HepG2 (cell line): ENCODE measurements at regions of chr12 and their contacts with region 1.

Region 1: DNA sequence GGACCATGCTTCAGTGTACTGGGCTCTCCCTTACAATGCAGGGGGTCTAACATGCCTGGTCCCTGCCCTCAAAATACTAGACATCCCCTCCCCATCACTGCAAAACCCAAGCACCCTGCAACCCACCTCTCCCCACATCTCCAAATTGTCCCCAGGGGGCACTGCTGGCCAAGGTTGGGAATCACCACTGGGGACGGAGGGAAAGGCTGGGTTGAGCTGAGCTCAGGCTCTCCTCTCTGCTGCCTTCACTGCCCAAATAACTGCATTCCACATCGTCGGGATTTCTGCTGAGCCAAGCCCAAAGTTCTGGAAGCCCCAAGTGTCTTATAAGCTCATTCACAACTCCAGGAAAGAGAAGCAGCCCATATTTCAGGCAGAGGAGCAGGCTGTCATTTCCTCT is 69.6 kb downstream of the NT5DC3 start:
- DNase-seq: peak; percentile 42
- ATAC-seq: peak; percentile 92
- H3K4me3 ChIP-seq: no peak overlapping the region
- H3K27ac ChIP-seq: no peak overlapping the region
- H3K4me1 ChIP-seq: peaks cover 9% of the 10 kb centered on the region; the same call in 1 of the 2 replicates
- H3K27me3 ChIP-seq: no peaks in the 10 kb centered on the region
- CTCF ChIP-seq: peak; percentile 79
- EP300 ChIP-seq: no peak
- POLR2A ChIP-seq: no peak
- RAD21 ChIP-seq: peak; percentile 79

Region 2: DNA sequence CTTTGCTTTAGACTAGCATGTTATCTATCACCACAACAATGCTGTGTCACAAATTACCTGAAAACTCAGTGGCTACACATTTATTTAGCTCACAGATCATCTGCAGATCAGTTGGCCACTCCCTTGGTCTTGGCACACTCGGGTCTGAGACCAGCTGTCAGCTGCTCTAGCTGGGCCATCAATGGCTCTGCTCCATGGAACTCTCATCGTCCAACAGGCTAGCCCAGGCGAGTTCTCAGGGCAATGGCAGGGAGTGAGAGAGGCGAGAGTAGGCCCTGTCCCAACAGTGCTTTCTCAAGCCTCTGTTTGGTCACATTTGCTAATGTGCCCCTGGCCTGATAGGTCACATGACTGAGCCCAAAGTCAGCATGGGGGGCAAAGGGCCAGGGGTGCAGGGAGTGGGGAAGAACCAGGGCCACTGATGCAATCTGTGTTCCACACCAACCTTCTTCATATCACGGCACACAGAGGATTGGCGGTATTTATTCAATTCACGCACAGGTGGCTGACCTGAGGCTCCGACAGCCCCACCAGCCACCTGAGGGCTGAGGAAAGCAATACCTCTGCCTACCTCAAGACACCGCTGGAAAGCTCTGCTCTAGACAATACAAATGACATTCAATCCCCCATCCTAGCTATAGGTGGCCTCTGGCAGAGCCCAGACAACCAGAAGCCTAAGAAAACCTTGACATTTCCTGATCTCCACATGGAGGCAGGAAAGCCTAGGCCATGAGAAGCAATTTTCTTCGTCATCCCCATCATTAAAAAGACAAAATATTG is 13.0 kb before region 1 on chr12:
- CTCF ChIA-PET with region 1: no interaction called
- POLR2A ChIA-PET with region 1: no interaction called
- in situ Hi-C with region 1: no loop called
- intact Hi-C with region 1: no loop called
- DNase-seq: no peak
- ATAC-seq: no peak
- H3K4me3 ChIP-seq: no peak overlapping the region
- H3K27ac ChIP-seq: no peak overlapping the region
- H3K4me1 ChIP-seq: no peaks in the 10 kb centered on the region
- H3K27me3 ChIP-seq: no peaks in the 10 kb centered on the region
- CTCF ChIP-seq: no peak
- EP300 ChIP-seq: no peak
- POLR2A ChIP-seq: no peak
- RAD21 ChIP-seq: no peak

Region 3: DNA sequence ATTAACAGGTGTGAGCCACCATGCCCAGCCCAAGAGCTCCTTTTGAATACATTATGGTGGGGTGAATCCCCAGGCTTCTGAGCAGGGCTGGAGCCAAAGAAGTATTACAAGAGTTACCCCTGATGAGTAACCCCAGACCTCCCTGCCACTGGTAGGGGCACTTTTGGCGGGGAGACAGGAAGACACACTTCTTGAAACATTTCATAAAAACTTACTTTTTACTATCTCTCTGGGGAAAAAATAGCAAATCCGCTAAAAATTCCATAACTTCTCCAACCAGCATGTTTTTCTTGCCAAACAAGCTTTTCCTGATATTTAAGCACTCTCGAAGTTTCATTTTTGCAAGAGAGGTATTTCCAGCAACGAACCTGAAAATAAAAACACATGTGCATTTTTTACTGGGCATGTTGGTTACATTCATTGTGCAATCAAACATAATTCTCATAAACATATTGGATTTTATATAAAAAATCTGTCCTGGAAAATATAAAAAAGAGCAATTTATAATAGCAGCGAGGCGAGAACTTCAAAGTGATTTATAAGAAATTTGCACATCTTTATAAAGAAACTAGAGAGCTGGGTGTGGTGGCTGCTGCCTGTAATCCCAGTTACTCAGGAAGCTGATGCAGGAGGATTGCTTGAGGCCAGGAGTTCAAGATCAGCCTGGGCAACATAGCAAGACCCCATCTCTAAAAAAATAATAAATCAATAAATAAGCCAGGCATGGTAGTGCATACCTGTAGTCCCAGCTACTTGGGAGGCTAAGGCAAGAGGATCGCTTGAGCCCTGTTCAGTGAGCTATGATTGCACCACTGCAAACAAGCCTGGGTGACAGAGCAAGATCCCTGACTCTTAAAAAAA is 89.7 kb after region 1 on chr12:
- CTCF ChIA-PET with region 1: no interaction called
- POLR2A ChIA-PET with region 1: no interaction called
- in situ Hi-C with region 1: loop called (anchors 10 kb)
- intact Hi-C with region 1: no loop called
- DNase-seq: no peak
- ATAC-seq: no peak
- H3K4me3 ChIP-seq: no peak overlapping the region
- H3K27ac ChIP-seq: no peak overlapping the region
- H3K4me1 ChIP-seq: peaks cover 62% of the 10 kb centered on the region
- H3K27me3 ChIP-seq: peaks cover 0 to 10% of the 10 kb centered on the region in 2 experiments; a peak in 1 of 5 replicates
- CTCF ChIP-seq: no peak
- EP300 ChIP-seq: no peak
- POLR2A ChIP-seq: no peak
- RAD21 ChIP-seq: no peak

Region 4: GRCh38 chr12:103868215-103868614 is 96.7 kb after region 1 on chr12:
- CTCF ChIA-PET with region 1: interaction called, 7 read pairs
- POLR2A ChIA-PET with region 1: no interaction called
- in situ Hi-C with region 1: loop called (anchors 10 kb)
- intact Hi-C with region 1: loop called (anchors 1 kb)
- DNase-seq: no peak
- ATAC-seq: no peak
- H3K4me3 ChIP-seq: no peak overlapping the region
- H3K27ac ChIP-seq: no peak overlapping the region
- H3K4me1 ChIP-seq: peaks cover 37% of the 10 kb centered on the region
- H3K27me3 ChIP-seq: no peaks in the 10 kb centered on the region
- CTCF ChIP-seq: no peak
- EP300 ChIP-seq: no peak
- POLR2A ChIP-seq: no peak
- RAD21 ChIP-seq: no peak